Right ventricle myocardium inferior (tissue), 1 donor: ENCODE measurements at regions of chr1 and their contacts with region 1.

Region 1: DNA sequence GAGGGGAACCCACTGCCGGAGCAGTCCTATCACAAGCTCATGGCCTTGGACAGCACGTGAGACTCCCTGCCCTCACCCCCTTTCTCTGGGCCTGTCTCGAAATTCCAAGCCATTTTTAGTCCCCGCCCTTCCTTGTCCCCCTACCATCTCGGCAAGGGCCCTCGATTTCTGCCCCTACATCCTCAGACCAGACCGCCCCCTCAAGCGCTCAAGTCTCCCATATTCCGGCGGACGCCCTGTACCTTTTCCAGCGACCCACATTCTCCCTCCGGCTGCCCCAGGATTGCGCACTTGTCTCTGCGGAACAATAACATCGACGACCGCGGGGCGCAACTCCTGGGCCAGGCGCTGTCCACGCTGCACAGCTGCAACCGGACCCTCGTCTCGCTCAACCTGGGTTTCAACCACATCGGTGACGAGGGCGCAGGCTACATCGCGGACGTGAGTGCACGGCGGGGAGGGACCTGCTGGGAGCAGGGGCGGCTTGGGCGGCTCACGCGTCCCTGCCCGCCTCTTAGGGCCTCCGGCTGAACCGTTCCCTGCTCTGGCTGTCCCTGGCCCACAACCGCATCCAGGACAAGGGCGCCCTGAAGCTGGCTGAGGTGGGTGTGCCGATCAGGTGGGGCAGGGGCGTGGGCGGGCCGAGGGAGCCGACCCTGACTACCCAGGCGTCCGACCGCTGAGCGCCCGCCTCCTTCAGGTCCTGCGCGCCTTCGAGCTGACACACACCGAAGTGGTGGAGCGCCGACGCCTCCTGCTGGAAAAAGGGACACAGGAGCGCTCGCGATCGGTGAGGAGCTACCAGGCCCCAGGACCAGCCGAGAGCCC is 7.0 kb downstream of the LRRC71 start:
- DNase-seq: peak; percentile 81
- ATAC-seq: peak; percentile 57

Region 2: GRCh38 chr1:156838981-156839410 is 88.4 kb before region 1 on chr1:
- intact Hi-C with region 1: loop called (anchors 5 kb)
- DNase-seq: no peak
- ATAC-seq: no peak